PC-9 (cell line): ENCODE measurements at regions of chr7 and their contacts with region 1.

Region 1: DNA sequence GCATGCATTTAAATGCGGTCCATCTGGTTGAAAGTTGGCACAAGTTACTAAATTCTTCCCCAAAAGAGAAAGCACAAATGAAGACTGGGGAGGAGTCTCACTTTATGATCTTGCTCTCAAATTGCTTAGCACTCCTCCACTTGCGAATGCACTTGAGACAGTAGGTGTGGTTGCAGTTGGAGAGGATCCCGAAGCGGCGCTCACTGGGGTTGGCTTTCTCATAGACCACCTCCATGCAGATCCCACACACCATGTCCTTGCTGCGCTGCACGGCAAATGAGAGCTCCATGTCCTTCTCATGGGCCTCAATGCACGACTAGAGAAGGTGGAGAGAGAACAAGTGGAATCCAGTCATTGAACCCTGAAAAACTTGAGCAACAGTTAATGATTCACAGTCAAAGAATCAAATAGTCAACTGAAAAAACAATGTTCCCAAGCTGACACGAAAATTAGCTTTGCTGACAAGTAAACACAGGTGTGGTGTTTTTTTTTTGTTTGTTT is 22.7 kb downstream of the MKRN1 start:
- DNase-seq: no peak
- H3K4me3 ChIP-seq: no peak overlapping the region
- H3K27ac ChIP-seq: no peak overlapping the region
- H3K4me1 ChIP-seq: no peaks in the 10 kb centered on the region
- H3K27me3 ChIP-seq: no peaks in the 10 kb centered on the region
- CTCF ChIP-seq: no peak

Region 2: DNA sequence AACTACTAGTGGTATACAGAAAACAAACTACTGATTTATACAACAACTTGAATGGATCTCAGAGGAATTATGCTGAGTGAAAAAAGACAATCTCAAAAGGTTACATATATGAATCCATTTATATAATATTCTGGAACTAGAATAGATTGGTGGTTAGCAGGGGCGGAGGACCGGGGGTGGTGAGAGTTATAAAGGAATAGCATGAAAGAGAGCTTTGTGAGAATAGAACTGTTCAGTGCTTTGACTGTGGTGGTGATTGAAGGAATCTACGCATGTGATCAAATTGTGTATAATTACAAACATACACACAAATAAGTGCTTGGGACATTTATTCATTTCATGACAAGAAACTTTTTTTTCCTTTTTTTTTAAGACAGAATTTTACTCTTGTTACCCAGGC is 33.1 kb before region 1 on chr7:
- CTCF ChIA-PET with region 1: no interaction called
- POLR2A ChIA-PET with region 1: no interaction called
- intact Hi-C with region 1: no loop called
- DNase-seq: no peak
- H3K4me3 ChIP-seq: no peak overlapping the region
- H3K27ac ChIP-seq: no peak overlapping the region
- H3K4me1 ChIP-seq: no peaks in the 10 kb centered on the region
- H3K27me3 ChIP-seq: no peaks in the 10 kb centered on the region
- CTCF ChIP-seq: no peak

Region 3: DNA sequence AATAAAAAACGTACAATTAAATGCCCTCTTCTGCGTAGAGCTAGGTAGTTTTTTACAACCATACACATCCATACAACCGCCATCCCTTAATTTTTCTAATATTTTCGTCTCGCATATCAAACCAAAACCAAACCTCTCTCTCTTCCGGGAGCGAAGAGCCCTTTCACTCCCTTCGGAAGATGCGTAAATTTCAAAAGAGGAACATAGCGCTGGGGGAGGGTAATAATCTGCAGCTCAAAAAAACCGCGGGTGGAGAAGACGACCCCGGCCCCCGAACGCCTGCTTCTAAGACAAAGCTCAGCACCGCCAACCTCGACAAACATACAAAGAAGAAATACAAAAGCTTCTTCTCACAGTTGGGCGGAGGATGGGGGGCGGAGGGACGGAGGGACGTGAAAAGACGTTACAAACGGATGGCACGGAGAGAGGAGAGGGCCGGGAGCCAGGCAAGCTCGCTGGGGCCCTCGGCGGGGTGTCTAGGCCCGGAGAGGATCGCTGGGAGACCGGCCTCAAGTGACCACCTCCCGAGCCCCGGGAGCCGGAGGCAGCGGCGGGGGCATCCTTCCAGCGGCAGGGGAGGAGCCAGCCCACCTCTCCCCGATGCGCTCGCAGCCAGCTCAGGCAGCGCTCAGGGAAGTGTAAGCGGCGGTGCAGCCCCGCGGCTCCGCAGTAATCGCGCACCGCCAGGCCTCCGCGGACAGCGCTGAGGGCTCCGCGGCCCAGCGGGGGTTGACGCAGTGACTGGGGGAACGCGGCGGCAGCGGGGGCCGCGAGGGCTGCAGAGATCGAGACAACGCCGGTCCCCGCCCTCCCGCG is 21.9 kb after region 1 on chr7:
- CTCF ChIA-PET with region 1: no interaction called
- POLR2A ChIA-PET with region 1: no interaction called
- intact Hi-C with region 1: no loop called
- DNase-seq: peak in 1 of 2 experiments; percentile 36
- H3K4me3 ChIP-seq: peak overlapping the region; percentile 86
- H3K27ac ChIP-seq: peak overlapping the region; percentile 71
- H3K4me1 ChIP-seq: peaks cover 26% of the 10 kb centered on the region
- H3K27me3 ChIP-seq: no peaks in the 10 kb centered on the region
- CTCF ChIP-seq: no peak

Region 4: DNA sequence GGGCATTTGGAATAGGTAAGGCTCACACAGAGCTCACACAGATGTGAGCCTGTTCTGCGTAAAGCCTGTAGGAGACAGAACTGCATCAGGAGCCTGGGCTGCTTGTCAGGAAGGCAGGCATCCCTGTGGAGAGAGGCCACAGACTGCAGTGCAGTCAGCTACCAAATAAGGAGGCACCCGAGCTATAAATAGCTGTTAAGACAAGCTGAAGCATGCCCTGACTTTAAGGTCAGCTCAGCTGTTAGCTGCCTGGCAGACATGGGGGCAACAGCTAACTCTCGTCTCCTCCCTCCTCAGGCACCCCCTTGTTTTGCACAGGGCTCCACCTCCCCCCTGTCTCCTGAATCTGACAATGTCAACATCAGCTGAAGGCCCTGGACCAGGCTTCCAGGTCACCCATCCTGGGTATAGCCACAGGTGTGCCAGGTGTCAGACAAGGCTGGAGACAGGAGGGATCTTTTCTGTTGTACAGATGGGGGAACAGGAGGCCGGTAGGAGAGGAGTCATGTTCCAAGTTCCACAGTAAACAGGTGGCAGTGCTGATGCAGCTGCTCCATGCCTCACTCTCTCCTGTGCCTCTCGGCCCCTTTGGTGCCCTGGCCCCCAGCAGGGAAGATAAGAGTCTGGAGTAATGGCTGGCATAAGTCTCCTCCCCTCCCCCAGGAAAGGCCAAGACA is 50.3 kb after region 1 on chr7:
- CTCF ChIA-PET with region 1: no interaction called
- POLR2A ChIA-PET with region 1: no interaction called
- intact Hi-C with region 1: no loop called
- DNase-seq: peak in 1 of 2 experiments; percentile 9
- H3K4me3 ChIP-seq: no peak overlapping the region
- H3K27ac ChIP-seq: no peak overlapping the region
- H3K4me1 ChIP-seq: peaks cover 12% of the 10 kb centered on the region
- H3K27me3 ChIP-seq: no peaks in the 10 kb centered on the region
- CTCF ChIP-seq: no peak

Region 5: DNA sequence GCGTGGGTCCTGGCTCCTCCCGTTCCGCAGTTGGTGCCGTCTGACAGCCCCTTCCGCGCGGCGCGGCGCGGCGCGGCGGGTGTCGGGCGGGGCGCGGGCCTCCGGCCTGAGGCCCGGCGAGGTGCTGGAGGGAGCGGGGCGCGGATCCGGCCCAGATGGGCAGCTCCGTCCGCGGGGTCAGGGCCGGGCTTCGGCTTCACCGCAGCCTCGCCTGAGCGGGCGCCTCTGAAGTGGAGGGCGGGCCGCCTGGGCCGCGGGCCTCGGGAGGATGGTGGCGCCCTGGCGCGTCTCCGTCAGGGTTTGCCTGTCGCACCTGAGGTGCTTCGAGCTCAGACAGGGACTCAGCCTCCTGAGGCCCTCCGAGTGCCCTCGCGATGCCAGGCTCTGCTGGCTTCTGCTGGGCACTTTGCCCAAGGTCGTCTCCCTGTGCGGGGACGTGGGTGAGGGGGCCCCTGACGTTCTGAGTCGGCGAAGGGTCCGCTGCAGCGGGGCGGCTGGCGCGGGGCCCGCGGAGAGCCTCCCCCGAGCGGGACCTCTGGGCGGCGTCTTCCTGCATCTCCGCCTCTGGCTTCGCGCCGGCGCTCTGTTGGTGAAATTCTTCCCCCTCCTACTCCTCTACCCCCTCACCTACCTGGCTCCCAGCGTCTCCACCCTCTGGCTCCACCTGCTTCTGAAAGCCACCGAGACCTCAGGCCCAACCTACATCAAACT is 216.6 kb after region 1 on chr7:
- CTCF ChIA-PET with region 1: no interaction called
- POLR2A ChIA-PET with region 1: interaction called, 16 read pairs
- intact Hi-C with region 1: no loop called
- DNase-seq: peak; percentile 56 to 77
- H3K4me3 ChIP-seq: peak overlapping the region; percentile 79
- H3K27ac ChIP-seq: peak overlapping the region; percentile 26; the same call in 1 of the 2 replicates
- H3K4me1 ChIP-seq: peaks cover 31% of the 10 kb centered on the region
- H3K27me3 ChIP-seq: no peaks in the 10 kb centered on the region
- CTCF ChIP-seq: no peak; the same call in 1 of the 2 replicates